Activated B cell treated with CpG ODN at 0.5 μM for 24 hours (primary cell): ENCODE measurements at regions of chr7 and their contacts with region 1.

Region 1: DNA sequence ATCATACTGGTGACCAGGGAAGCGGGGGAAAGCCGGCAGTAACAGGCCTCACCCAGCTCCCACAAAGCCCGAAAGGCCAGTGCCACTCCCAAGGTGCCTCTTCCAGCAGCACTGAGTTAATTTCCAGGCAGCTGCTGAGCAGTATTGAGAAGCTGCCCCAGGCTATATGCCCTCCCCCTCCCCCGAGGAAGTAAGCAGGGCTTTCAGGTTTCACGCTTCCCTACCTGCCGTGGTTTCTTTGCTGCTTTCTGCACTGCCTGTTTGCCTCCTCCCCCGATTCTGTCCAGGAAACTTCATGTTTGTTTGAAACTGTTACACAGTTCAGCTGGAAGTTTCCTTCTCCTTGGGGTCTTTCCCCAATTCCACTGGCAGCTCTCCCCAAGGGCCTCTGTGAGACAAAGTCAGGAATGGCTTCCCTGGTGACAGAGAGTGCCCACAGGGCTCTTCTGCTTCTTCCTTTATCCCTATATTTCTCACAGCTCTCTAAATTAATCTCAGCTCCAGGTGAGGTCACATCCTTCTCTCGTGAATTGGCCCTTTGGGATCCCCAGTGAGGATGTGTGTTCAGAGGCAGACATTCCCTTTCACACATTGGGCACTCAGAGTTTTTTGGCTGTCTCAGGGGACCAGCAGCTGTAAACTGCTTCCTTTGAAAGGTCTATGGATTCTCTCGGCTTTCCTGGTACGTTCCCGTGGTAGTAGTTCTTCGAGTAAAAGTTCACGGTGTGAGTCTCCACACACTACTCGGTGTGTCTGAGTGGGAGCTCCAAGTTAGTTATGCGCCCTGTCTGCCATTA is 19.4 kb downstream of the C1GALT1 start:
- DNase-seq: peak; percentile 35
- ATAC-seq: peak; percentile 100
- H3K4me3 Mint-ChIP-seq: peak overlapping the region; percentile 67
- H3K27ac Mint-ChIP-seq: peak overlapping the region; percentile 86
- H3K4me1 Mint-ChIP-seq: peaks cover 90% of the 10 kb centered on the region
- H3K27me3 Mint-ChIP-seq: no peaks in the 10 kb centered on the region
- CTCF ChIP-seq: no peak

Region 2: GRCh38 chr7:7051206-7051877 is 150.4 kb before region 1 on chr7:
- CTCF ChIA-PET with region 1: no interaction called
- POLR2A ChIA-PET with region 1: no interaction called
- intact Hi-C with region 1: no loop called
- DNase-seq: no peak
- ATAC-seq: peak; percentile 77
- H3K4me3 Mint-ChIP-seq: no peak overlapping the region
- H3K27ac Mint-ChIP-seq: peak overlapping the region; percentile 71
- H3K4me1 Mint-ChIP-seq: peaks cover 8% of the 10 kb centered on the region
- H3K27me3 Mint-ChIP-seq: peaks cover 2% of the 10 kb centered on the region
- CTCF ChIP-seq: no peak

Region 3: DNA sequence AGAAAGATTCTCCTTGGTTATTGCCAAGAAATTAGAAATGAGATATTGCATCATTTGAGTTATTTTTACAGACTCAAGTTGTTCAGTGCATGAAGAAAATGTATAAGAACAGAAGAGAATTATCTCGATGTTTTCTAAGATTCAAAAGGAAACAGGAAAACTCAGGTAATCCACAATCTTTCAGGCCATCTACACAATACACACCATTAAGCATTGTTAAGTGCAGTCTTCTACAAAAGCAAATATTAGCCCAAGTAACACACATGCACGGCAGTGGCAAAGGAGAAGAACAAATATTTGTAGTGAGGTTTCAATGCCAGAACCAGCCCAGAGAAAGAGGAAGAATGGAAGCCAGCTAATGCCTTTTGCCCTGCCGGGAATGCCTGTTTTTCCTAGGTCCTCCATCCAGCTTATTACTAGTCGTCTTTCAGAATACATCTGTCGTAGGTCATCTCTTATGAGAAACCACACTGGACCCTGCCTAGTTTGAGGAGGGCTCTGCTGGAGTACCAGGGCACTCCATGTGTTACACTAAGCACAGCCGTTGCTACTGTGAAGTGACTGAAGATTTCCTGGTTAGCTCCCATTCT is 87.0 kb before region 1 on chr7:
- CTCF ChIA-PET with region 1: no interaction called
- POLR2A ChIA-PET with region 1: no interaction called
- intact Hi-C with region 1: no loop called
- DNase-seq: no peak
- ATAC-seq: no peak
- H3K4me3 Mint-ChIP-seq: no peak overlapping the region
- H3K27ac Mint-ChIP-seq: no peak overlapping the region
- H3K4me1 Mint-ChIP-seq: no peaks in the 10 kb centered on the region
- H3K27me3 Mint-ChIP-seq: no peaks in the 10 kb centered on the region
- CTCF ChIP-seq: no peak

Region 4: GRCh38 chr7:7157177-7157886 is 44.4 kb before region 1 on chr7:
- CTCF ChIA-PET with region 1: no interaction called
- POLR2A ChIA-PET with region 1: no interaction called
- intact Hi-C with region 1: loop called (anchors 1 kb)
- DNase-seq: no peak
- ATAC-seq: peak; percentile 86
- H3K4me3 Mint-ChIP-seq: peak overlapping the region; percentile 88
- H3K27ac Mint-ChIP-seq: peak overlapping the region; percentile 95
- H3K4me1 Mint-ChIP-seq: peaks cover 56% of the 10 kb centered on the region
- H3K27me3 Mint-ChIP-seq: no peaks in the 10 kb centered on the region
- CTCF ChIP-seq: no peak

Region 5: GRCh38 chr7:7212612-7213011 is 10.8 kb after region 1 on chr7:
- CTCF ChIA-PET with region 1: no interaction called
- POLR2A ChIA-PET with region 1: no interaction called
- intact Hi-C with region 1: loop called (anchors 1 kb)
- DNase-seq: no peak
- ATAC-seq: no peak
- H3K4me3 Mint-ChIP-seq: no peak overlapping the region
- H3K27ac Mint-ChIP-seq: no peak overlapping the region
- H3K4me1 Mint-ChIP-seq: peaks cover 47% of the 10 kb centered on the region
- H3K27me3 Mint-ChIP-seq: no peaks in the 10 kb centered on the region
- CTCF ChIP-seq: no peak

Region 6: DNA sequence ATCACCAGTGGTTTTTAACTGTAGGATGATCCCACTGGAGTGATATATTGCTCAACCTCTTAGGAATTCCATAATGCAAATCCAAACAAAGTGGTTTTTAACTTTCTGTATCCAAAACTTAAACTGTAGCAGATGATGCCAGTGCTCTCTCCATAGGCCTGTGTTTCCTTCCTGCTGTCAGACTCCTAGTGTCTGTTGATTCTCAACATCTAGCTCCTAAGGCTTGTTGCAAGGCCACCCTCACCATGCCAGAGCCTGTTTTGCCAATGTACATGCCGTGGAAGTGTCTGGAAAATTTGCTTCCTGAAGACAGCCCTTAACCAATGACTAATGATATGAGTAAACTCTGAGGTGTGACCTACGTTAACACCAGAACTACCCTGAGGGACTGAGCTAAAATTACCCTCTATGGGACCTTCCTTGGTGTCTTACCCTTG is 19.8 kb after region 1 on chr7:
- CTCF ChIA-PET with region 1: interaction called, 3 read pairs
- POLR2A ChIA-PET with region 1: no interaction called
- intact Hi-C with region 1: loop called (anchors 2 kb)
- DNase-seq: no peak
- ATAC-seq: no peak
- H3K4me3 Mint-ChIP-seq: no peak overlapping the region
- H3K27ac Mint-ChIP-seq: peak overlapping the region; percentile 43
- H3K4me1 Mint-ChIP-seq: peaks cover 23% of the 10 kb centered on the region
- H3K27me3 Mint-ChIP-seq: no peaks in the 10 kb centered on the region
- CTCF ChIP-seq: no peak

Region 7: DNA sequence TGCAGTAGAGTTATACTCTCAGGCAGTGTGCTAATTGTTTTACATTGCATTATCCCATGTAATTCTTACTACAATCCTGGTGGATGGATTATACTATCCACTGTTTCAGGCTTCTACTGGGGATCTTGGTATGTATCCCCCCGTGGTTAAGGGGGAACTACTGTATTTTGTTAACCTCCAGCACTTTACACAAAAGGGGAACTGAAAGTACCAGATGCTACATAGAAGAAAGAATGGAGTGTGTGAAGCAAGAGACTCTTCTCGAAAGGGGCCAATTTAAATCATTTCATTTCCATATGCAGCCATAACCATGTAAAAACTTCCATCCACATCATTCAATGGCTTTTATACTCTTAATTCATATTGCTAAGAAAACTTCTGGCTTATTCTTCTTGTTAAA is 50.0 kb after region 1 on chr7:
- CTCF ChIA-PET with region 1: no interaction called
- POLR2A ChIA-PET with region 1: no interaction called
- intact Hi-C with region 1: loop called (anchors 1 kb)
- DNase-seq: no peak
- ATAC-seq: peak; percentile 96
- H3K4me3 Mint-ChIP-seq: peak overlapping the region; percentile 49
- H3K27ac Mint-ChIP-seq: peak overlapping the region; percentile 96
- H3K4me1 Mint-ChIP-seq: peaks cover 85% of the 10 kb centered on the region
- H3K27me3 Mint-ChIP-seq: no peaks in the 10 kb centered on the region
- CTCF ChIP-seq: no peak

Region 8: GRCh38 chr7:7257899-7258692 is 56.3 kb after region 1 on chr7:
- CTCF ChIA-PET with region 1: no interaction called
- POLR2A ChIA-PET with region 1: interaction called, 5 read pairs
- intact Hi-C with region 1: loop called (anchors 2 kb)
- DNase-seq: no peak
- ATAC-seq: peak; percentile 77
- H3K4me3 Mint-ChIP-seq: peak overlapping the region; percentile 78
- H3K27ac Mint-ChIP-seq: peak overlapping the region; percentile 89
- H3K4me1 Mint-ChIP-seq: peaks cover 66% of the 10 kb centered on the region
- H3K27me3 Mint-ChIP-seq: no peaks in the 10 kb centered on the region
- CTCF ChIP-seq: no peak

Region 9: DNA sequence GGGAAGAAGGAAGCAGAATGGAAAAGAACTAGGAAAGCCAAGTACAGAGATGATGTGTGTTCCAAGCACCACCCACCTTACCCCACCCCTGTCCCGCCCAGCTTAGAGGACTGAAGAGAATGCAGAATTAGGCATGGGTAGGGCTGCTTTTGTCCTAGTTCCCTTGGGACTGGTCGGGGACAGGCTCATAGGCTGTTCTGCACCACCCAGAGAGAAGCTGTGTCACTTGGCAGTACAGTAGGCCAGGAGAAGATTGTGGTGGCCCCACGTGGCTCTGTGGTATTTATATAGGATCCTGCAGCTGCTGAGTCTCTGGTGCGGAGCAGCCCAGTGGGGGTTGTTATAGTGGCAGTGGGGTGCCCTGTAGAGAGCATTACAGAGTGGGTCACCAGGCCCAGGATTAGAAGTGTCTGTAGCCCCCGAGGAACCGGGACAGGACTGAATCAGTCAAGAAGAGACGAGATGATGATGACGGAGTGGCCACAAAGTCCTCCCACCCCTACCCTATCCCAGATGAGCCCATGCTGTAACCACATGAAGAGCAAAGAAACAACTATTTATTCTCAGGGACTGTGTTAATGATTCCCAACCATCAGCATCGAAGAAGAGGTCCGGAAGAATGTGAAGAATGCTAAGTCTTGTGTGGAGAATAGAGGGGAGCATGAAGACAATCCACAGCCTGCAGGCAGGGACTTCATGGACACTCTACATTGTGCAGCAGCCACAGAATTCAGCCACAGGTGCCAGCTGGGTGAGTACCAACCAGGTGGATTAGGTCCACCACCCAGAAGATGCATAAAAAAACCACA is 69.5 kb after region 1 on chr7:
- CTCF ChIA-PET with region 1: no interaction called
- POLR2A ChIA-PET with region 1: no interaction called
- intact Hi-C with region 1: no loop called
- DNase-seq: no peak
- ATAC-seq: no peak
- H3K4me3 Mint-ChIP-seq: no peak overlapping the region
- H3K27ac Mint-ChIP-seq: no peak overlapping the region
- H3K4me1 Mint-ChIP-seq: peaks cover 16% of the 10 kb centered on the region
- H3K27me3 Mint-ChIP-seq: no peaks in the 10 kb centered on the region
- CTCF ChIP-seq: no peak